ENCODE measurements at regions of chr2 and their contacts with region 1.

Region 1: DNA sequence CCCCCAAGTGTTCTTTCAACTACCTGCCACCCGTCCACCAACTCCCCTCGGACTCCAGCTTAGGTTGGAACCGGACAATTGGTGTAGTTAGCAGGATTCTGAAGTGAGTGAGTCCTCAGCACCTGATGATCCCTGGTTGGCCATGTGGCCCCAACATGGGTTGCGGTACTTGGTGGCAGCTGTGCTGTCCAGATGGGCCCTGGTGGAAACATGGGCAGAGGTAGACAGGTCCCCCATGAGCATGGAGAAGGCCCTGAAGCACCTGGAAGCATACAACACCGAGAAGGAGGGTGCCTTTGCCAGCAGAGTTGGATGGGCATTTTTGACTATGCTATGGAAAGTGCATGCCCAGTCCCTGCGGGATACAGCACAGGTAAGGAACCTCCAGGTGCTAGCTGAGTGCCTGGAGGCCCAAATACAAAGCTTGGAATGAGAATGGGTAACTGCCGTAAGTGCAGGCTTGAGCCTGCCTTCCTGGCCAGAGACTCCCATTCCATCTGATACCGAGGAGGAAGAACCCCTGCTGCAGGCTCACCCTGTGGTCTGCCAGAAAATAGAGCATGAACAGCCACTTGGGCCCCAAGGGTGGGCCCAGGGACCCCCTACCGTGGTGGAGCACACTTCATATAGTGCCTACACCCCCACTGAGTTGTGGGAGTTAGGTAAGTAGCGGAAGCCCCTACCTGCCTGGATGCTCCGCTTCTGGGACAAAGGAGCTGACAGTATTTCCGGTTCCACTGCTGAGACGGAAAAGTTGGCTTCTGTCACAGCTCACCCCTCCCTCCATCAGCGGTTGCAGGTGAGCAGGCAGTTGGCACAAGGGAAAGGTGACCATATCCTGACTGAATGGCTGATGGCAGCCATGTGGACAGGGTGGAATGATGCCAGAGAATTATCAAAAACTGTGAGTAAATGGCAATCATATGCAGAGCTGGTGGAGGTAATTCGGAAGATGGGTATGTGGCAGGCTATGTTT is 11.3 kb upstream of the C2orf42 start:
- DNase-seq: no peak
- H3K4me3 Mint-ChIP-seq: no peak overlapping the region
- H3K27ac Mint-ChIP-seq: no peak overlapping the region
- H3K4me1 Mint-ChIP-seq: no peaks in the 10 kb centered on the region
- H3K27me3 Mint-ChIP-seq: no peaks in the 10 kb centered on the region

Region 2: GRCh38 chr2:69946351-69947077 is 255.6 kb before region 1 on chr2:
- CTCF ChIA-PET with region 1: no interaction called
- intact Hi-C with region 1: no loop called
- DNase-seq: peak; percentile 78
- H3K4me3 Mint-ChIP-seq: no peak overlapping the region
- H3K27ac Mint-ChIP-seq: peak overlapping the region; percentile 60
- H3K4me1 Mint-ChIP-seq: peaks cover 28% of the 10 kb centered on the region
- H3K27me3 Mint-ChIP-seq: no peaks in the 10 kb centered on the region

Region 3: GRCh38 chr2:70214953-70215549 is 12.9 kb after region 1 on chr2:
- CTCF ChIA-PET with region 1: no interaction called
- intact Hi-C with region 1: loop called (anchors 2 kb)
- DNase-seq: no peak
- H3K4me3 Mint-ChIP-seq: no peak overlapping the region
- H3K27ac Mint-ChIP-seq: no peak overlapping the region
- H3K4me1 Mint-ChIP-seq: peaks cover 34% of the 10 kb centered on the region
- H3K27me3 Mint-ChIP-seq: no peaks in the 10 kb centered on the region

Region 4: GRCh38 chr2:70283500-70284191 is 81.5 kb after region 1 on chr2:
- CTCF ChIA-PET with region 1: no interaction called
- intact Hi-C with region 1: no loop called
- DNase-seq: no peak
- H3K4me3 Mint-ChIP-seq: no peak overlapping the region
- H3K27ac Mint-ChIP-seq: no peak overlapping the region
- H3K4me1 Mint-ChIP-seq: peaks cover 33% of the 10 kb centered on the region
- H3K27me3 Mint-ChIP-seq: no peaks in the 10 kb centered on the region